ENCODE measurements at regions of chr2 and their contacts with region 1.

Region 1: DNA sequence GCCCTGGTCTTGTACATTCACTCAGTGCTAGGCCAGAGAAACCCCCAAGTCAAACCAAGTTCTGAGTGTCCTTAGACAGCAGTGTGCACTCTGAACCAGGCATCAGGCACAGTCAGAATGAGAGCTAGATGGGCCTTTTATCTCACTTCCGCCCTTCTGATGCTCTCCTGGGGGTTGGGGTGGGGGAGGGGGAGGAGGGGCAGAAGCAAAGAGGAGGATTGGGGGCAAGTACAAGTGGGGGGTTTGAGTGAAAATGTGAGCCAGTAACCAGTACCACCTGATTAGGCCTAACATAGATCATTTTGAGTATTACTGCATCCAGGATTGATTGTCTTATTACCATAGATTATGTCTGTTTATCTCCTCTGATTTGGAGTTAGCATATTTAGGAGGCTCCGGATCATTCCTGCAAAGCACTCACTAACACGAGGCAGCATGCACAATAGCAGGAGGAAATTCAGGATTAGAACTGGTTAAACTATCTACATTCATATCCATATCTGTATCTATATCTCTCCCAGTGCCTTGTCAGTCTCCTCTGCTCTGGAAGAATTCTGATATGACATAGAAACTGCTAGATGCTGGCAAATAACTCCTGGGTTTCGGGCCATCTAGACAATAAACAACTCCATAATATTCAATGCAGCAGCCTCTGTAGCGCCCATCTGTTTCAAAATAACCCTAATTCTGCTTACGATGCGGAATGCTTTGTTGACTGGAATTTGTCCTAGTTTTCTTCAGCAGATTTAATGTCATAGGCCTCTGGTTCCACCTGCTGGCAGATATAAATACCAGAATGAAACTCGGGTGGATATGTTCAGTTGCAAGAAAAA is 149.1 kb downstream of the RHBDD1 start:
- DNase-seq: no peak
- ATAC-seq: peak; percentile 80

Region 2: GRCh38 chr2:225556461-225556860 is 1428.5 kb before region 1 on chr2:
- intact Hi-C with region 1: no loop called
- DNase-seq: no peak
- ATAC-seq: no peak

Region 3: DNA sequence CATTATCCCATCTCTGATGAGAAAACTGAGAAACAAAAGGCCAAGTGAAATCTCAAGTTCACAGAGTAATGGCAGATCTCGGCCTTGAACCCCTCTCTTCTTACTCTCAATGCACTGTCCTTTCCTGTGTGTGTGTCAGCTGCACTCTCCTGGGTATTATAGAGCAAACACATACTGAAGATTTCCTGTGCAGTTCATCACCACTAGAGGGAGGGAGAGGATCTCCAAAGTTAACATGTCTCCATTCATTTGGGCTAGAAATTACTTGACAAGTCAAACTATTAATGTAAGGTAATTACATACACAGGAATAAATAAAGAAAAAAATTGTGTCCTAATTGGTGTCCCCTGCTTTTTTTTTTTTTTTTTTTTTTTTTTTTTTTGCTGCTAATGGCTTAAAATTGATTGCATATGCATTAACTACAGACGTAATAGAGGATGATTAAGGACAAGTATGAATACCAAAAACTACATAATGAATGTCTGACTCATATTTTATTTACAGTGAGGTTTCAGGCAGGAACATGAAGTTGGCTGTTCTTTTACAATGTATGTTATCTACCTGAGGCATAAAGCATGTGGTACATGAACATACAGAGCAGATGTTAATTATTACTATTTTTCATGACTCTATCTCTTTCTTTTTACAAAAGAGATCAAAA is 1316.2 kb before region 1 on chr2:
- intact Hi-C with region 1: loop called (anchors 5 kb)
- DNase-seq: no peak
- ATAC-seq: peak; percentile 58

Region 4: GRCh38 chr2:225895126-225895525 is 1089.8 kb before region 1 on chr2:
- intact Hi-C with region 1: loop called (anchors 5 kb)
- DNase-seq: no peak
- ATAC-seq: no peak

Region 5: GRCh38 chr2:226818930-226819329 is 166.0 kb before region 1 on chr2:
- intact Hi-C with region 1: no loop called
- DNase-seq: no peak
- ATAC-seq: no peak

Region 6: DNA sequence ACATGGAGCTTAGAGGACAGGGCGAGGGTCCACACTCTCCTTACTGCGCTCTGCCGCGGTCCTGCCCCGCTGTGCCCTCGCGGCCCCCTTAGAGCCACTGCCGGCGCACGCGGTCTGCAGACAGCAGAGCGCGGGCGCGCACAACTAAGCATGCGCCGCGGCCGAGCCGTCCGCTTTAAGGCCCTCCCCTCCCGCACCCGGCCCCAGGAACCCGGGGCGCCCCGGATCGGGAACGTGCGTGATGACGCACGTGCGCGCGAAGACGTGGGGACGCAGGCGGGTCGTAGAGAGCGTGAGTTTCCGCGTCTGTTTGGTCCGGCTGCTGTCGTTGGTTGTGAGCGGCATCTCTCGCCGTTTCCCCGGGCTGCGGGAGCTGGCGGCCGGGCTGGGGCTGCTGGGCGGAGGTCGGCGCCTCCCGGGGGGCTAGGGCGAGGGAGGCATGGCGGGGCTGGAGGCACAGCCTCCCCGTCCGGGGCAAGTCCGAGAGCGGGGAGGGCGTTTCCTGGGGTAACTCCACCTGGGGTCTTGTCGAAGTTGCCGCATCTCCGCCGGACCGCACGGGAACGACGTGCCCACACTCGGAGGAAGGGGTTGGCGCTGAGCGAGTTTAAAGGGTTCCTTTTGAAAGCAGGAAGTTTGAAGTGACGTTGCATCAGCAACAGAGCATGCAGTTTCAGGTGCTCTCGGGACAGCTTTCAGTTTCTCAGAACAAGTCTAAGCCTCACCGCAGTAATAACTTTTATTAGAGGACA is 149.0 kb before region 1 on chr2 and contains the start of gene RHBDD1:
- intact Hi-C with region 1: loop called (anchors 10 kb)
- DNase-seq: peak; percentile 97
- ATAC-seq: peak; percentile 100
- total RNA-seq, gene RHBDD1: 29.8 TPM